ENCODE measurements at regions of chr6 and their contacts with region 1.

Region 1: DNA sequence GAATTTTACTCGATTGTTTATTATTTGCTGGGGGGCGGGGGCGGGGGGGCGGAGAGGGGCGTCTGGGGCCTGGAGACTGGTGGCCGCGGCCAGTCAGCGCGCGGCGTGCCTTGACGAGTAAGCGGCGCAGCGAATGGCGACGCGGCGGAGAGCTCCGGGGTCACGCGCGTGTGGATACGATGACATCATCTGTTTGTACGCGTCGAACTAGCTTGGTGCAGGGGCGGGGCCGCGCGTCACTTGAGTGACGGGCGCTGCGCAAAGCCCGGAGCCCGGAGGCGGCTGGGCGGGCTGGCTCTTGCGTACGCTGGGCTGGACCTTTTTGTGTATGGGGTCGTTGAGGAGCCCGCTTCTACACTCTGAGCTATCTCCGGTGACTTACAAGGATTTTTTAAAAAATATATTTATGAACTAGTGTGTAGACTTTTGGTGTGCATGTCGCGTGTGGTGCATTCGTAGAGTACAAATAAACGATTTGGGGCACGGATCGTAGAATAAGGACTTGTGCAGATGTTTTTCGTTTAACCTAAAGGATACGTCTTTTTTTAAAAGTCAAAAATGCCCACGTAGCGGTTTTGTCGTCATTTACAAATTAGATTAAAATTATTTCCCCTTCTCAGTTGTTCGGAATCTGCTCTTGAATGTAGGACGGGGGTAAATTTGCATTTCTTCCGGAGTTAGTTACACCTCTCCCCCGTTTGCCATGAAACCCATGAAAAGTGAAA is 2.2 kb upstream of the FOXO3 start:
- DNase-seq: peak; percentile 99
- ATAC-seq: peak; percentile 71

Region 2: DNA sequence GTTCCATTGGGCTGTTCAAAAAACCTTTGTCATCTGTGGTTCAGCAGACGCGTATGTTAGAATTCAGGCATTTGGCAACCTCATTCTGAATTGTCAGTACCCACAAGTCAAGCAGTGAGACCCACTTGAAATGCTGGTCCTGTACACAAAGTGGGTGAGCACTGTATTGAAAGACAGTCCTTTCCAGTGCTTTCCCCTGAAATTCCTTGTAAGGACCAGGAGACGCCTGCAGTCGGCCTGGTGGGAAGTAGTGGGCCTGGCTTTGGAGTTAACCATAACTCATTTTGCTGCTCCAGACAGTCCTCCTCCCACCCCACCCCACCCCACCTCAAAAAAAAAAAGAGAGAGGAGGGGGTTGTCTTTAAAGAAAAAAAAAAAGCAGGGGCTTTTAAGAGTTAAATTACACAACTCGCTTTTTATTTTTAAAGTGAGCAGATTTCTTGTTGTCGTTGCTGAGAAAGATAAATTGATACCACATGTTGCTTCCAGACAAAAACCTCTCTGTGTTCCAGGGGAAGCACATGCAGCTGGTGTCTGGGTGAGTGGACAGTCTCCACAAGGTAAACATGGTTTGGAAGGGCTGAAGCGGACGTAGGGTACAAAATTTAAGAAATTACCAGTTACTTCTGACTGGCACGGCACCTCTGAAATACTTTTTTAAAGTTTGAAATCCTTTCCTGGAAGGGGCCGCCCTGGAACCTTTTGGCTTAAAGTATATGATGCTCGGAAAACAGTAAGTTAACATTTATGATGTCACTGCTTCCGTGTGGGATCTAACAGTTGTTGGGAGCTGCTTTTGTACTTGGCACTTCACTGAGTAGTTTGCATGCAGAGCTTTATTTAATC is 97.5 kb after region 1 on chr6:
- intact Hi-C with region 1: loop called (anchors 1 kb)
- DNase-seq: no peak
- ATAC-seq: peak; percentile 60

Region 3: DNA sequence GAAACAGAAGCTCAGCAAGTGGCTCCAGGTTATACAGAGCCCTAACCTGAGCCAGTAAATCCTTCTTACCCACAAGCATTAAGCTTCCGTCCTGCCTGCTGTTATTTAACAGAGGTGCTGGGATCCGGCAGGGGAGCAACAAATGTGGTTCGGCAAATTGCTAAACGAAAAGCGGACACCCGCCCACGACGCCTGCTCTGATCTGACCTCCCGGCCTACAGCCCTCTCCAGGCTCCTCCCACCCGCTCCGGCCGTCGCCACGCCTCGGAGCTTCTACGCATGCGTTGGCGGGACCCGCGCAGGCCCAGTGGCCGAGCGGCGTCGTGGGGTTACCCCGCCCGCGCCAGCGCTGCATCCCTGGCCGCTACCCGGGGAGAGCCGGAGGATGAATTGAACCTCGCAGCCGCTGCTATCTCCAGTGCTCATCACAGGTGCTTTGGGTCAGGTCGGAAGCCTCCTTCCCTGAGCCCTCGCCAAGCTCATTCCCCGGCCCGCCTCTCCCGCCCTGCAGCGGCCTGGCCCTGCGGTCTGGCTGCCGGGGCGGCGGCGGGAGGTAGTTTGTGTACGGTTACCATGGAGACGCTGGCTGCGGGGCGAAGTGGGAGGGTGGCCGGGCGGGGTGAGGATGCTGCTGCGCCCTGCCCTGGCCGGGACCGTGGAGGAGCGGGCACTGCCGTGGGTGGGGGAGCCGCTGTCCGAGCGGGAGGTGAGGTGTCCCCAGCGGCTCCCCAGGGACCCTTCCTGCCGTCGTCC is 289.8 kb after region 1 on chr6 and contains the start of gene ARMC2:
- intact Hi-C with region 1: loop called (anchors 5 kb)
- DNase-seq: peak; percentile 98
- ATAC-seq: peak; percentile 98
- total RNA-seq, gene ARMC2: 9.5 TPM

Region 4: DNA sequence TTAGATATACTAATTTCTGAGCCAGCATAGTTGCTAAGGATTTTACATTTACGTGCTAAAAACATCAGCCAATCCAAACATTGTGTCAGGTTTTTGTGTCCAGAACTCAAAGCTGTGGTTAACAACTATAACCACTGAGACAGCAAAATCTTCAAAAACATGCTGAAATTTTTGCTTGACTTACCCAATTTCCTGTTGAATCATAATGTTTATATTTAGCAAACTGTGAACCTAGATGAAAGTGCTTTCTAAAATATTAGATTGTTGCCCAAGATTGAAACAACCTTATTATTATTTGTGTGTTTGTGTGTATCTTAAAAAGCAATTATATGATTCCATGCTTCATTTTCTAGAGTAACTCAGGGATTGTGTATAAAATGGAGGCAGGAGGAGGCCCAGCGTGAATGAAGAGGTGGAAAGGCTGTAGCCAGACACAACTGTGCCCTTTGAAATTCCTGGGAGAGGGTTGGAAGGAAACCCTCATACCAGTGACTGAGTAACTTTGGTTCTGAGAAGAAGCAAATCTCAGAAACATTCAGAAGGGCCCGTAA is 337.7 kb after region 1 on chr6:
- intact Hi-C with region 1: loop called (anchors 5 kb)
- DNase-seq: no peak
- ATAC-seq: no peak

Region 5: GRCh38 chr6:109082188-109082577 is 523.6 kb after region 1 on chr6:
- intact Hi-C with region 1: loop called (anchors 5 kb)
- DNase-seq: no peak
- ATAC-seq: peak; percentile 21